CD14-positive monocyte (primary cell): ENCODE measurements at regions of chr11 and their contacts with region 1.

Region 1: DNA sequence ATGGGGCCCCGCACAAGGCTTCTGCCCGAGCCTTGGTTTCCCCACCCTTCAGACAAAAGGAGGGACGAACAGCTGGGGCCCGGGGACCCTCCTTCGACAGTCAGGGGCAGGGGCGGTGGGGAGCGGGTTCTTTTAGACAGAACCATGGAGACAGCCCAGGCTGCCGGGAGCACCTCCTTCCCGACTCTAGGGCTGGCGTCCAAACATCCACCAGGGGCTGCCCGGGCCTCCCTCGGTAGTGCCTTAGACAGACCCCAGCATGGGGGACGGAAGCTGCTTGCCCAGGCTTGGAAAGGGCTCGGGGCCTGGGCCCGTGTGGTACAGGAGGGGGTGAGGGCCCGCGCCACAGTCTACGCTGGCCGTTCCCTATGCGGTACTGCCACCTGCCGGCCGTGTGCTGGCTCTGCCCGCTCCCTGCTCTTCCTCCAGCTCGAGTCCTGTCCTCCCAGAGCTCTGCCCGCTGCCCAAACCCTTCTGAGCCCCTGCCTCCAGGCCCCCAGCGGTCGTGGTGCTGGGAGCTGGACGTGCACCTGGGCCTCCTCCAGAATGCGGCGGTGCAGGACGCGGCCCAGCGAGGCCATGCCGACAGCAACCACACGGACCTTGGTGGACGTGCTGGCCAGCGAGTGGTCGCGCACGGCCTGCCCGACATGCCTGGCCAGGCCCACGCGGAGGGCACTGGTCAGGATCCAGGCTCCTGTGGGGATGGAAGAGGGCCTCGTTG is 20.1 kb downstream of the TSSC4 start:
- DNase-seq: peak; percentile 65 to 79 (median 79)
- H3K4me3 ChIP-seq: no peak overlapping the region
- H3K4me3 Mint-ChIP-seq: no peak overlapping the region
- H3K27ac ChIP-seq: no peak overlapping the region
- H3K27ac Mint-ChIP-seq: no peak overlapping the region
- H3K4me1 ChIP-seq: peaks cover 4 to 6% of the 10 kb centered on the region in 2 donors
- H3K4me1 Mint-ChIP-seq: peaks cover 2% of the 10 kb centered on the region
- H3K27me3 ChIP-seq: no peaks in the 10 kb centered on the region
- H3K27me3 Mint-ChIP-seq: peaks cover 2 to 25% (median 7%) of the 10 kb centered on the region in 3 donors
- CTCF ChIP-seq: peak; percentile 84

Region 2: GRCh38 chr11:2186669-2187279 is 233.9 kb before region 1 on chr11:
- intact Hi-C with region 1: loop called in 1 of 2 experiments (anchors 1 kb)
- DNase-seq: peak; percentile 36 to 50 (median 40)
- H3K4me3 ChIP-seq: peak overlapping the region in 1 of 3 experiments; percentile 31
- H3K4me3 Mint-ChIP-seq: no peak overlapping the region
- H3K27ac ChIP-seq: no peak overlapping the region
- H3K27ac Mint-ChIP-seq: no peak overlapping the region
- H3K4me1 ChIP-seq: peaks cover 15 to 26% of the 10 kb centered on the region in 2 donors
- H3K4me1 Mint-ChIP-seq: peaks cover 15% of the 10 kb centered on the region
- H3K27me3 ChIP-seq: peaks cover 0 to 10% of the 10 kb centered on the region in 2 donors
- H3K27me3 Mint-ChIP-seq: peaks cover 13 to 17% (median 14%) of the 10 kb centered on the region in 3 donors
- CTCF ChIP-seq: peak; percentile 77

Region 3: DNA sequence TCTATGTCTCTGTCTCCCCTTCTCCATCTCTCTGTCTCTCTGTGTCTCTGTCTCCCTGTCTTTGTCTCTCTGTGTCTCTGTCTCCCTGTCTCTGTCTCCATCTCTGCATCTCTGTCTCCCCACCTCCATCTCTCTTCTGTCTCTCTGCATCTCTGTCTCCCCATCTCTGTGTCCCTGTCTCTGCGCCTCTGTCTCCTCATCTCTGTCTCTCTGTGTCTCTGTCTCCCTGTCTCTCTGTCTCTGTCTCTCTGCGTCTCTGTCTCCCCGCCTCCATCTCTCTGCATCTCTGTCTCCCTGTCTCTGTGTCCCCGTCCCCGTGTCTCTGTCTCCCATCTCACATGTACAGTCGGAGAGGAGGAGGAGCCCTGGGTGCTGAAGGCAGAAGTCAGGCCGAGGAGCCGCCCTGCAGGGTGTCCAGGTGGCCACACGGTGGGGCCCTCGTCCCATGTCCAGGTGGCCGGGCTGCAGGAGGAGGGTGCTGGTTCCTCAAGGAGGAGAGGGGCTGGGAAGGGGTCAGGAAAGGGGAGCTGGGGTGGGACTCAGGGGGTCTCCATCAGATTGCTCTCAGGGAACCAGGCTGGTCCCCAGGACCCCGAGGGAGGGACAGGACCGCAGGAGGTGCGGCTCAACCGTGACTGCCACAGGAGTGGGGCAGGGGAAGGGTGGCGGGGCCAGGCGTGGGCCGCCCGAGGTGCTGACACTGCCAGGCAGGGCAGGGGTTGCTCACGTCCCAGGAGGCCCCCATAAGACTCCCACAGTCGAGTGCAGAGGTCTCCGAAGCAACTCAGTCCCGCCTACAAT is 223.5 kb before region 1 on chr11:
- intact Hi-C with region 1: loop called (anchors 1 to 2 kb)
- DNase-seq: peak; percentile 60 to 70 (median 67)
- H3K4me3 ChIP-seq: no peak overlapping the region
- H3K4me3 Mint-ChIP-seq: peak overlapping the region in 1 of 2 donors; percentile 62
- H3K27ac ChIP-seq: no peak overlapping the region
- H3K27ac Mint-ChIP-seq: no peak overlapping the region
- H3K4me1 ChIP-seq: peaks cover 3 to 12% of the 10 kb centered on the region in 2 donors
- H3K4me1 Mint-ChIP-seq: peaks cover 3% of the 10 kb centered on the region
- H3K27me3 ChIP-seq: peaks cover 0 to 5% of the 10 kb centered on the region in 2 donors
- H3K27me3 Mint-ChIP-seq: peaks cover 15 to 25% (median 21%) of the 10 kb centered on the region in 3 donors
- CTCF ChIP-seq: peak; percentile 77

Region 4: GRCh38 chr11:2305140-2305840 is 115.4 kb before region 1 on chr11:
- intact Hi-C with region 1: loop called (anchors 1 to 2 kb)
- DNase-seq: peak; percentile 71 to 80 (median 76)
- H3K4me3 ChIP-seq: peak overlapping the region; percentile 9 to 86 (median 19)
- H3K4me3 Mint-ChIP-seq: peak overlapping the region; percentile 68 to 96
- H3K27ac ChIP-seq: no peak overlapping the region
- H3K27ac Mint-ChIP-seq: peak overlapping the region in 2 of 7 donors; percentile 65 to 91
- H3K4me1 ChIP-seq: peaks cover 58 to 71% of the 10 kb centered on the region in 2 donors
- H3K4me1 Mint-ChIP-seq: peaks cover 56% of the 10 kb centered on the region
- H3K27me3 ChIP-seq: no peaks in the 10 kb centered on the region
- H3K27me3 Mint-ChIP-seq: peaks cover 0 to 2% (median 0%) of the 10 kb centered on the region in 3 donors
- CTCF ChIP-seq: peak; percentile 90

Region 5: GRCh38 chr11:2355000-2355644 is 65.5 kb before region 1 on chr11:
- intact Hi-C with region 1: loop called in 1 of 2 experiments (anchors 10 kb)
- DNase-seq: no peak
- H3K4me3 ChIP-seq: no peak overlapping the region
- H3K4me3 Mint-ChIP-seq: no peak overlapping the region
- H3K27ac ChIP-seq: no peak overlapping the region
- H3K27ac Mint-ChIP-seq: no peak overlapping the region
- H3K4me1 ChIP-seq: no peaks in the 10 kb centered on the region
- H3K4me1 Mint-ChIP-seq: no peaks in the 10 kb centered on the region
- H3K27me3 ChIP-seq: no peaks in the 10 kb centered on the region
- H3K27me3 Mint-ChIP-seq: peaks cover 5 to 23% (median 18%) of the 10 kb centered on the region in 3 donors
- CTCF ChIP-seq: no peak

Region 6: DNA sequence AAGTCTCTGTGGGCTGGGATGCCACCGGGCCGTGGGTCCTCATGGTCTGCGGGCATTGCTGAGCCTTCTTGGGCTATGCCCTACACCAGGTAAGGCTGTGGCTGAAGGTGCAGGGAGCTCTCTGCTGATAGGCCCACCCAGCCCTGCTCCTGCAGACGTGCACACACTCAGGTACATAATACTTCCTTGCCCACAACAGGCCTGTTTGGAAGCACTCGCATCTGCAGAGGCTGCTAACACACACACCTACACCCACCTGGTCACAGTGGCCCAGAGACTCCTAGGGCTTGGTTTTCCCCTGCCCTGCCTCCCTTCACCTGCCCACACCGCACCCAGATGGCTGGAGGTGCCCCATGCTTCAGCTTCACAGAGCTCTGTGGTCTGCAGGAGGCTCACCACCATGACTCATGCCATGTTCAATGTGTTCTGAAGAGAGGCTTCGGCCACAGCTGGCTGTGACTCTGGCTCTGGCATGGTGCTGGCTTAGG is 351.9 kb after region 1 on chr11:
- intact Hi-C with region 1: no loop called
- DNase-seq: no peak
- H3K4me3 ChIP-seq: no peak overlapping the region
- H3K4me3 Mint-ChIP-seq: no peak overlapping the region
- H3K27ac ChIP-seq: no peak overlapping the region
- H3K27ac Mint-ChIP-seq: no peak overlapping the region
- H3K4me1 ChIP-seq: no peaks in the 10 kb centered on the region
- H3K4me1 Mint-ChIP-seq: peaks cover 2% of the 10 kb centered on the region
- H3K27me3 ChIP-seq: no peaks in the 10 kb centered on the region
- H3K27me3 Mint-ChIP-seq: peaks cover 0 to 8% (median 5%) of the 10 kb centered on the region in 3 donors
- CTCF ChIP-seq: no peak